Activated CD8-positive, alpha-beta memory T cell treated with anti-CD3 and anti-CD28 coated beads, Interleukin-2, amount 10 ng/mL, durations not matched to agents 7 days and 5 days (primary cell): ENCODE measurements at regions of chrX and their contacts with region 1.

Region 1: GRCh38 chrX:10119399-10119990 is 37.3 kb upstream of the CLCN4 start:
- DNase-seq: peak; percentile 76
- ATAC-seq: peak; percentile 63
- H3K4me3 Mint-ChIP-seq: no peak overlapping the region
- H3K27ac Mint-ChIP-seq: peak overlapping the region; percentile 23
- H3K4me1 Mint-ChIP-seq: peaks cover 24% of the 10 kb centered on the region
- H3K27me3 Mint-ChIP-seq: no peaks in the 10 kb centered on the region

Region 2: GRCh38 chrX:9988762-9989161 is 130.7 kb before region 1 on chrX:
- CTCF ChIA-PET with region 1: interaction called, 15 read pairs
- DNase-seq: no peak
- ATAC-seq: no peak
- H3K4me3 Mint-ChIP-seq: no peak overlapping the region
- H3K27ac Mint-ChIP-seq: no peak overlapping the region
- H3K4me1 Mint-ChIP-seq: no peaks in the 10 kb centered on the region
- H3K27me3 Mint-ChIP-seq: peaks cover 14% of the 10 kb centered on the region

Region 3: GRCh38 chrX:9995855-9996339 is 123.6 kb before region 1 on chrX:
- CTCF ChIA-PET with region 1: interaction called, 37 read pairs
- DNase-seq: peak; percentile 76
- ATAC-seq: peak; percentile 74
- H3K4me3 Mint-ChIP-seq: no peak overlapping the region
- H3K27ac Mint-ChIP-seq: no peak overlapping the region
- H3K4me1 Mint-ChIP-seq: peaks cover 17% of the 10 kb centered on the region
- H3K27me3 Mint-ChIP-seq: no peaks in the 10 kb centered on the region

Region 4: GRCh38 chrX:10004852-10005475 is 114.5 kb before region 1 on chrX:
- CTCF ChIA-PET with region 1: interaction called, 28 read pairs
- DNase-seq: no peak
- ATAC-seq: no peak
- H3K4me3 Mint-ChIP-seq: no peak overlapping the region
- H3K27ac Mint-ChIP-seq: no peak overlapping the region
- H3K4me1 Mint-ChIP-seq: peaks cover 32% of the 10 kb centered on the region
- H3K27me3 Mint-ChIP-seq: no peaks in the 10 kb centered on the region

Region 5: DNA sequence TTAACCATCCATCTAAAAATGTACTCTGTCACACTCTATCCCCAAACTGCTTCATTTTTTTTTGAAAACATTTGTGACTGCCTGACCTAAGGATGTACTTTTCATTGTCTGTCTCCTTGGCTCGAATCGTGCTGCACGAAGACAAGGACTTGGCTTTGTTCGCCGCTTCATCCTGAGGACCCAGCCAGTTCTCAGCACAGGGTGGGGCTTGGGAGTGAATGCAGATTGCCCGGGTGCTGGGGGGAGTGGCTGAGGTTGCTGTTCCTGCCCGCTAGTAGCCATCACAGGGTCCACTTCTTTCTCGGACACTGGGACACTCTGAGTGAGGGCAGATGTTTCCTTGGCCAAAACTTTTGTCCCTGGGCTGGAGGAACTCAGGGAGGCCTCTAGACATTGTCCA is 32.8 kb before region 1 on chrX:
- CTCF ChIA-PET with region 1: interaction called, 47 read pairs
- DNase-seq: no peak
- ATAC-seq: no peak
- H3K4me3 Mint-ChIP-seq: no peak overlapping the region
- H3K27ac Mint-ChIP-seq: peak overlapping the region; percentile 76
- H3K4me1 Mint-ChIP-seq: peaks cover 42% of the 10 kb centered on the region
- H3K27me3 Mint-ChIP-seq: no peaks in the 10 kb centered on the region

Region 6: GRCh38 chrX:10098270-10098713 is 21.2 kb before region 1 on chrX:
- CTCF ChIA-PET with region 1: interaction called, 19 read pairs
- DNase-seq: peak; percentile 78
- ATAC-seq: peak; percentile 87
- H3K4me3 Mint-ChIP-seq: peak overlapping the region; percentile 88
- H3K27ac Mint-ChIP-seq: peak overlapping the region; percentile 98
- H3K4me1 Mint-ChIP-seq: peaks cover 38% of the 10 kb centered on the region
- H3K27me3 Mint-ChIP-seq: no peaks in the 10 kb centered on the region

Region 7: GRCh38 chrX:10146346-10146745 is 26.9 kb after region 1 on chrX:
- CTCF ChIA-PET with region 1: no interaction called
- DNase-seq: no peak
- ATAC-seq: no peak
- H3K4me3 Mint-ChIP-seq: no peak overlapping the region
- H3K27ac Mint-ChIP-seq: no peak overlapping the region
- H3K4me1 Mint-ChIP-seq: no peaks in the 10 kb centered on the region
- H3K27me3 Mint-ChIP-seq: no peaks in the 10 kb centered on the region

Region 8: GRCh38 chrX:10235851-10236250 is 116.4 kb after region 1 on chrX:
- CTCF ChIA-PET with region 1: no interaction called
- DNase-seq: no peak
- ATAC-seq: no peak
- H3K4me3 Mint-ChIP-seq: no peak overlapping the region
- H3K27ac Mint-ChIP-seq: no peak overlapping the region
- H3K4me1 Mint-ChIP-seq: no peaks in the 10 kb centered on the region
- H3K27me3 Mint-ChIP-seq: no peaks in the 10 kb centered on the region